PC-3 (cell line): ENCODE measurements at regions of chr9 and their contacts with region 1.

Region 1: GRCh38 chr9:115837618-115838017 is 316.0 kb upstream of the PAPPA start:
- DNase-seq: no peak
- ATAC-seq: no peak
- H3K4me3 ChIP-seq: no peak overlapping the region
- H3K27ac ChIP-seq: no peak overlapping the region
- H3K4me1 ChIP-seq: no peaks in the 10 kb centered on the region
- H3K27me3 ChIP-seq: no peaks in the 10 kb centered on the region
- CTCF ChIP-seq: no peak

Region 2: DNA sequence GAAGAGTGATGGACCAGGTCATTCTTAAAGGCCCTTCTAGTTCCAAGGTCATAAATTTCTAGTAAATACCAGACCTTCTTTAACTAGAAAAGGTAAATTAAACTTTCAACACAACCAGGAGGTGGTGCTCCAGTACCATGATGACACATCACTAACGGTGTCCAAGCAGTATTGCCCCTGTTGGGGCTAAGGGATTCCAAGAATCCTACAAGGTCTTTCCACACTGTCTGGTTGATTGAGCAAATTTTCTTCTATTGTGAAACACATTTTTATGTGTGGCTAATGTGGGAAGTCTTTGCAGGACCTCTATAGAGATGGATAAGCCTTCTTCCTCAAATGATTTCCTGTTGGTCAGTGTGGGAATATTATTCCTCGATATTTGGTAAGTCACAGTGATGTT is 143.6 kb before region 1 on chr9:
- CTCF ChIA-PET with region 1: no interaction called
- POLR2A ChIA-PET with region 1: no interaction called
- intact Hi-C with region 1: no loop called
- DNase-seq: peak; percentile 61
- ATAC-seq: no peak; the same call in 1 of the 2 replicates
- H3K4me3 ChIP-seq: no peak overlapping the region
- H3K27ac ChIP-seq: no peak overlapping the region
- H3K4me1 ChIP-seq: peaks cover 21% of the 10 kb centered on the region
- H3K27me3 ChIP-seq: no peaks in the 10 kb centered on the region
- CTCF ChIP-seq: peak; percentile 65

Region 3: GRCh38 chr9:115786321-115786720 is 51.3 kb before region 1 on chr9:
- CTCF ChIA-PET with region 1: no interaction called
- POLR2A ChIA-PET with region 1: no interaction called
- intact Hi-C with region 1: no loop called
- DNase-seq: no peak
- ATAC-seq: no peak
- H3K4me3 ChIP-seq: no peak overlapping the region
- H3K27ac ChIP-seq: no peak overlapping the region
- H3K4me1 ChIP-seq: no peaks in the 10 kb centered on the region
- H3K27me3 ChIP-seq: no peaks in the 10 kb centered on the region
- CTCF ChIP-seq: no peak

Region 4: DNA sequence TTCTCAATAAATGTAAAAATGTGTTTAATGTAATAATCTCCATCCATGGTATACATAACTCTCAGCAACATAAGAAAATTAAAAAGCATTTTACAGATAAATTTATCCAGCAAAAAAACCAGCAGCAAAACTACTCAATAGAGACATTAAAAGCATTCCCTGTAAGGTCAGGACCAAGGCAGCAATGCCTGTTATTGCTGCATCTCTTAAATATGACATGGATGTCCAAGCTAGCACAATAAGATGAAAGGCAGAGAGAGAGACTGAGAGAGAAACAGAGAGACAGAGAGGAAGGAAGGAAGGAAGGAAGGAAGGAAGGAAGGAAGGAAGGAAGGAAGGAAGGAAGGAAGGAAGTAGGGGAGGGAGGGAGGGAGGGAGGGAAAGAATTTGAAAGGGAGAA is 27.0 kb after region 1 on chr9:
- CTCF ChIA-PET with region 1: no interaction called
- POLR2A ChIA-PET with region 1: no interaction called
- intact Hi-C with region 1: loop called (anchors 2 kb)
- DNase-seq: no peak
- ATAC-seq: no peak
- H3K4me3 ChIP-seq: no peak overlapping the region
- H3K27ac ChIP-seq: no peak overlapping the region
- H3K4me1 ChIP-seq: no peaks in the 10 kb centered on the region
- H3K27me3 ChIP-seq: 0 out of 2 replicates have a peak, but pooled peaks cover 4% of the 10 kb centered on the region
- CTCF ChIP-seq: no peak

Region 5: DNA sequence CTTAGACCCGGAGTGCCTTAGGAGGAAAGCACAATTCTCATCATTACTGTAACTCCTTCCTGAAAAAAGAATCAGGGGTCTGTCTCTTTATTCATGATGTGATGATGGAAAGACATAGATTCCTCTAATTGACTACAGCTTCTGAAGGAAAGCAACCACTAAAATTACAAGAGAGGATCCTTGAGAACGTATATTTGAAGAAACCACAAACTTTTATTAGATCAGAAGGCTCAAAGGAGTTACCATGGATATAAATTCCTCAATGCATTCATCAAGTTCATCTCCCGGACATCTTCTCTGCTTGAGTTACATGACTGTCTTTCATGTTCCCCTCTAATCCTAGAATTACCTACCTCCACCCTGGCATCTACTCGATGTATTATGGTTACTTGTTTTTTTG is 211.8 kb after region 1 on chr9:
- CTCF ChIA-PET with region 1: no interaction called
- POLR2A ChIA-PET with region 1: no interaction called
- intact Hi-C with region 1: no loop called
- DNase-seq: no peak
- ATAC-seq: no peak
- H3K4me3 ChIP-seq: no peak overlapping the region
- H3K27ac ChIP-seq: no peak overlapping the region
- H3K4me1 ChIP-seq: no peaks in the 10 kb centered on the region
- H3K27me3 ChIP-seq: no peaks in the 10 kb centered on the region
- CTCF ChIP-seq: no peak